ENCODE measurements at regions of chr3 and their contacts with region 1.

Region 1: GRCh38 chr3:151468284-151468917 is 7.5 kb upstream of the IGSF10 start:
- DNase-seq: peak; percentile 48 to 78
- H3K4me3 ChIP-seq: no peak overlapping the region
- H3K27ac ChIP-seq: no peak overlapping the region
- H3K4me1 ChIP-seq: no peaks in the 10 kb centered on the region
- H3K27me3 ChIP-seq: no peaks in the 10 kb centered on the region
- CTCF ChIP-seq: peak in 5 of 7 experiments; percentile 33 to 86 (median 67)
- EP300 ChIP-seq: no peak
- POLR2A ChIP-seq: no peak

Region 2: DNA sequence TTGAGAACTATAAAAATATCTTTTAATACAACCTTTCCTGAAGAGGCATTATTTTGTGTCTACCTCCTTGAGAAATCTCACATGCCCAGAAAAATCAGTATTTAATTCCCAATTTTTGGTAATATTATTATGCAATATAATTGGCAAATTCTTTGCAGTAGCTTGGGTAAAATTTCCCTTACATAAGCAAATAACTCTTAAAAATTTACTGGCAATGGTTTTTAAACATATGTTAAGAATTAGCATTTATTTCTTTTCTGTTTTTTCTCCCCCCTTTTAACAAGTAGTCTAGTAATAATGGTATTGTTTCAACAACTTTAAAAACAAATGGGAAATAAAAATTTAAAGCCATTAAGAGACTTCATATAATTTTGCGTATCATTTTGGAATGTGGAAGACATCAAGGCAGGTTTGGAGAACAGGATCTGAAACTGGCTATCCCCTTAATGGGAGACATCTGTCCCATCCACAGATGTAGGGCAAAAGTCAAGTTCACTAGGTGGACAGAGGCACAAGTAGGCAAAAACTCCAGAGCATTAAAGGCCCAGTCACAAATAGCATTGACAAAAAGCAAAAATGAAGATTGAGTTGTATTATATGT is 175.7 kb after region 1 on chr3:
- intact Hi-C with region 1: no loop called
- DNase-seq: no peak
- H3K4me3 ChIP-seq: no peak overlapping the region
- H3K27ac ChIP-seq: no peak overlapping the region
- H3K4me1 ChIP-seq: no peaks in the 10 kb centered on the region
- H3K27me3 ChIP-seq: no peaks in the 10 kb centered on the region
- CTCF ChIP-seq: no peak
- EP300 ChIP-seq: no peak
- POLR2A ChIP-seq: no peak

Region 3: DNA sequence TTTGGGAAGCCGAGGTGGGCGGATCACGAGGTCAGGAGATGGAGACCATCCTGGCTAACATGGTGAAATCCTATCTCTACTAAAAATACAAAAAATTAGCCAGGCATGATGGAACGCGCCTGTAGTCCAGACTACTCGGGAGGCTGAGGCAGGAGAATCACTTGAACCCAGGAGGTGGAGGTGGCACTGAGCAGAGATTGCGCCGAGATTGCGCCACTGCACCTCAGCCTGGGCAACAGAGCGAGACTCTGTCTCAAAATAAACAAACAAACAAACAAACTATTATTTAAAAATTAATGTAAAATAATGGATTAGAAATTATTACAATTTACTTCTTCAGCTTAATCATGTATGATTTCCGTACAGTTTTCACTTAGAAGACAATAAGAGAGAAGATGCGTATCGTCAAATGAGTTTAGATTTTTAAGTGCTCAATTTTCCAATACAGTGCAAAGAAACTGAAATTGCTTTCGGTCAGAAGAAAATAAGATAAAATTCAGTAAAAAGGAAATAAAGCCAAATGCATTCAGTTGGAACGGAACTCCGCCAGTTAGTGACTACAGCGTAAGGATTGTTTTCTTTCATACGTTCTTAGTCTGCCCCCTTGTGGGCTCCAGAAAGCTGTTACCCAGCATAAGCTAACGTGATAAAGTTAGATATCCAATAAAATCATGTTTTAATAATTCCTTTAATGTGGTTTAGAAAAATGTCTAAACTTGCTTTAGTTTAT is 370.3 kb after region 1 on chr3:
- intact Hi-C with region 1: loop called (anchors 10 kb)
- DNase-seq: peak; percentile 61 to 93
- H3K4me3 ChIP-seq: peak overlapping the region in 3 of 4 donors; percentile 12 to 23 (median 22)
- H3K27ac ChIP-seq: no peak overlapping the region
- H3K4me1 ChIP-seq: peaks cover 4 to 32% (median 17%) of the 10 kb centered on the region in 4 donors
- H3K27me3 ChIP-seq: no peaks in the 10 kb centered on the region
- CTCF ChIP-seq: peak in 5 of 7 experiments; percentile 63 to 75 (median 70)
- EP300 ChIP-seq: no peak
- POLR2A ChIP-seq: no peak

Region 4: DNA sequence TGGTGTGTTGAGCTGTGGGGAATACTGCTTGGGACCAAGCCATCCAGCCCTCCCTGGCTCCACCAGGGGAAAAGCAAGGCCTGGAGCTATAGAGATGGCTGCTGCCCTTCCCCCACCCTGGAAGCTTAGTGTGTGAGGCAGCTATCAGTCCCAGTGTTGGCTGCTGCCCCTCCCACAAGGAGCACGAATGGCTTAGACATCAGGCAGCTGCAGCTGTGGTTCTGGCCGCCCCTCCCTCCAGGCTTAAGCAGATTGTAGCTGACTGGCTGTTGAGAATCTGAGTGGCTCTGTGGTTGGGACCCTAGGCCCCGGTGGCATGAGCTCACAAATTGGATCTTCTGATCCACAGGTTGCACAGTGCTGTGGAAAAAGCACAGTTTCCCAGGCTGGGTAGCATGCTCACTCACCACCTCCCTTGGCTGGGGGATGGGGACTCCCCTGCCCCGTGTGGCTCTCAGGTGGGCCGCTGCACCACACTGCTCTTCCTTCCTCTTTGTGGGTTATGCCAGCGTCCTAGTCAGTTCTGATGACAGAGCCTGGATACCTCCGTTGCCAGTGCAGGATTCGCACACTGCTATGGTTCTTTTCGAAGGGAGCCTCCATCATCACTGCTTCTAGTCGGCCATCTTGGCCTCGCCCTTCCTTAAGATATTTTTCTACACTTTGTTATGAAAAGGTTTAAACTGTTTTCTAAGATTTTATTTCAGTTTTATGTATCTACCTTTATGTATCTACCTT is 383.8 kb after region 1 on chr3:
- intact Hi-C with region 1: no loop called
- DNase-seq: no peak
- H3K4me3 ChIP-seq: no peak overlapping the region
- H3K27ac ChIP-seq: no peak overlapping the region
- H3K4me1 ChIP-seq: no peaks in the 10 kb centered on the region
- H3K27me3 ChIP-seq: no peaks in the 10 kb centered on the region
- CTCF ChIP-seq: no peak
- EP300 ChIP-seq: no peak
- POLR2A ChIP-seq: no peak

Measured in stomach (tissue), 19 donors.